Sciatic nerve (tissue), 2 donors: ENCODE measurements at regions of chr6 and their contacts with region 1.

Region 1: GRCh38 chr6:100116411-100117194 is 122.6 kb upstream of the MCHR2 start:
- DNase-seq: no peak
- ATAC-seq: peak; percentile 65

Region 2: GRCh38 chr6:99711302-99711701 is 405.3 kb before region 1 on chr6:
- intact Hi-C with region 1: no loop called
- DNase-seq: no peak
- ATAC-seq: no peak

Region 3: GRCh38 chr6:100479179-100480035 is 362.8 kb after region 1 on chr6:
- intact Hi-C with region 1: loop called (anchors 2 kb)
- DNase-seq: no peak
- ATAC-seq: no peak

Region 4: GRCh38 chr6:101000341-101000740 is 883.7 kb after region 1 on chr6:
- intact Hi-C with region 1: no loop called
- DNase-seq: no peak
- ATAC-seq: no peak